ENCODE measurements at regions of chr12 and their contacts with region 1.

Region 1: DNA sequence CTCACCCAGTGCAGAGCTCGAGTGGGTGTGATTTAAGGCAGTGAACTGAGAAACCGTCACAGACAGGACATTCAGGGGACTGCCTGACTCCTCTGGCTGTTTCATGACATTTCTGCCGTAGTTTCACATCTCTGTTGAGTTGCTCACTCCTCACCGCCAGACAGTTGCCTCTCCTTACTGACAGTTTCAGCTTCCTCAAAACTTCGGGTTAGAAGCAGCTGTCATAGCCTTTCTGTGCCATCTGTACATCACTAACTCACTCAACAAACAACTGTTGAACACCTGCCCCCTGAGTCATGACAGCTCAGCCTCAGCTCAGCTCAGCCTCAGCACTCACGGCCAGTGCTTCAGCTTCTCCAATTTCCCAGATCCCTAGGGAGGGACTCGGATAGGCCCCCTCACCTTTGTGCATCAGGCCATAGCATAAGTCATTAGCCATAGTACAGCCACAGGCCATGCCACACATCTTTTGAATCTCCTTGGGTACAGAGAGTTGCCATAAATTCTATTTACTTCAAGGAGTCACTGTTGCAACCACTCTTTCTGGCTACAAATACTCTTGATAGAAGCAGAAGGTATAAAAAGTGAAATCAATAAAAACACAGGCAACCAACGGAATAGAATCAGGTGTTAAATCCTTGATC is 6.2 kb upstream of the SLC15A4 start:
- DNase-seq: peak; percentile 40
- H3K4me3 Mint-ChIP-seq: no peak overlapping the region
- H3K27ac Mint-ChIP-seq: peak overlapping the region; percentile 37
- H3K4me1 Mint-ChIP-seq: peaks cover 9% of the 10 kb centered on the region
- H3K27me3 Mint-ChIP-seq: peaks cover 18% of the 10 kb centered on the region

Region 2: GRCh38 chr12:128339126-128339520 is 490.9 kb before region 1 on chr12:
- CTCF ChIA-PET with region 1: no interaction called
- intact Hi-C with region 1: no loop called
- DNase-seq: no peak
- H3K4me3 Mint-ChIP-seq: no peak overlapping the region
- H3K27ac Mint-ChIP-seq: no peak overlapping the region
- H3K4me1 Mint-ChIP-seq: no peaks in the 10 kb centered on the region
- H3K27me3 Mint-ChIP-seq: peaks cover 10% of the 10 kb centered on the region

Region 3: GRCh38 chr12:128914908-128915563 is 85.1 kb after region 1 on chr12:
- CTCF ChIA-PET with region 1: no interaction called
- intact Hi-C with region 1: loop called (anchors 1 kb)
- DNase-seq: peak; percentile 78
- H3K4me3 Mint-ChIP-seq: no peak overlapping the region
- H3K27ac Mint-ChIP-seq: peak overlapping the region; percentile 14
- H3K4me1 Mint-ChIP-seq: peaks cover 30% of the 10 kb centered on the region
- H3K27me3 Mint-ChIP-seq: no peaks in the 10 kb centered on the region

Measured in activated naive CD4-positive, alpha-beta T cell treated with anti-CD3 and anti-CD28 coated beads for 36 hours (primary cell).